HepG2 (cell line): ENCODE measurements at regions of chr18 and their contacts with region 1.

Region 1: DNA sequence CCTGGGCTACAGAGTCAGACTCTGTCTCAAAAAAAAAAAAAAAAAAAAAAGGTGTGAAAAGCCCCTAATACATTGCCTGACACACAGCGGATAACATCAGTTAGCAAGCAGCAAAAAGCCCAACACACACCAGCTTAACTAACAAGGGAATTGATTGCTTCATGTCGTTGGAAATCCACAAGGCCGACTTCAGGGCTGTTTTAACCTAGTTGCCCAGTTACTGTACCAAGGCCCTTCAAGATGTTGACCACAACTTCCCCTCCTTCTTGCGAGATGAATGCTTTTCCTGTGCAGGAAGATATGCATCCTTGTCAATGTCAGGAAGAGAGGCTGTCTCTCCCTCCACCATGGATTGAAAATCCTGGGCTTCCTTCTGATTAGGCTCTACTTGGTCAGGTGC is 202.9 kb downstream of the MIB1 start:
- DNase-seq: no peak
- ATAC-seq: no peak
- H3K4me3 ChIP-seq: no peak overlapping the region
- H3K27ac ChIP-seq: no peak overlapping the region
- H3K4me1 ChIP-seq: 0 out of 2 replicates have a peak, but pooled peaks cover 7% of the 10 kb centered on the region
- H3K27me3 ChIP-seq: no peaks in the 10 kb centered on the region; a peak in 2 of 5 replicates
- CTCF ChIP-seq: no peak
- EP300 ChIP-seq: no peak
- POLR2A ChIP-seq: no peak
- RAD21 ChIP-seq: no peak

Region 2: GRCh38 chr18:22005191-22005841 is 61.9 kb after region 1 on chr18:
- CTCF ChIA-PET with region 1: no interaction called
- POLR2A ChIA-PET with region 1: no interaction called
- in situ Hi-C with region 1: no loop called
- intact Hi-C with region 1: loop called (anchors 2 kb)
- DNase-seq: no peak
- ATAC-seq: no peak
- H3K4me3 ChIP-seq: no peak overlapping the region
- H3K27ac ChIP-seq: no peak overlapping the region
- H3K4me1 ChIP-seq: peaks cover 49% of the 10 kb centered on the region
- H3K27me3 ChIP-seq: no peaks in the 10 kb centered on the region
- CTCF ChIP-seq: no peak
- EP300 ChIP-seq: no peak
- POLR2A ChIP-seq: no peak
- RAD21 ChIP-seq: no peak

Region 3: DNA sequence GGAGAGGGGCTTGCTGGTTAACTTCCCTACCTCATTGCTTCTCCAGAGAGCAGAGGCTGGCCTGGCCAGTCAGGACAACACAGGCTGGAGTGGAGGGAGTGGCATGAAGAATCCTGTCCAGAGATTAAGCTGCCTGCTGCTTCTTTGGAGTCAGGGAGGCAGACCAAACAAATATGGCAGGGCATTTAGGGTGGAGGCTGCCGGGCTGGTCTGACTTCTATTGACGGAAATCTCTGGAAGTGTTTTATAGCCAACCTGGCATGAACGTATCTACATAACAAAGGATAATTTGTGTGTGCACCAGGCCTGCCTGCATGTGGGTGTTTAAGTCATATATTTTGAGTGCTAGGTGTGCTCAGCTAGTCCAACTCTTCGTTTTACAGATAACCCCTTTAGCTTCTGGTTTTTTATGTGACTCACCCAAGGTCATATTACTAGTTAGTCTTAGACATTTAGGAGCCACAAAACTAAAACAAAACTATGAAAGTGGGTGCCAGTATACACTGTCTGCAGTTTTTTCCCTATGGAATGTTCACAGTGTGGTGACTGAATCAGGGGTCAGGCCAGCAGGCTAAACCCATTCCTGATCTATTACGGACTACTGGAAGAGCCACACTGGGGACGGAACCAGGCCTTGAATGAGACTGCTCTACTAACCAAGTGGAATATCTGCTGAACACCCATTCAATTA is 1637.4 kb after region 1 on chr18:
- CTCF ChIA-PET with region 1: no interaction called
- POLR2A ChIA-PET with region 1: no interaction called
- in situ Hi-C with region 1: no loop called
- intact Hi-C with region 1: loop called (anchors 5 kb)
- DNase-seq: no peak
- ATAC-seq: no peak
- H3K4me3 ChIP-seq: no peak overlapping the region
- H3K27ac ChIP-seq: peak overlapping the region; percentile 7
- H3K4me1 ChIP-seq: peaks cover 73% of the 10 kb centered on the region
- H3K27me3 ChIP-seq: peaks cover 0 to 5% of the 10 kb centered on the region in 2 experiments; a peak in 1 of 5 replicates
- CTCF ChIP-seq: no peak
- EP300 ChIP-seq: no peak
- POLR2A ChIP-seq: no peak
- RAD21 ChIP-seq: no peak